Caco-2 (cell line): ENCODE measurements at regions of chr5 and their contacts with region 1.

Region 1: GRCh38 chr5:66239034-66239433 is 94.9 kb downstream of the SREK1 start:
- DNase-seq: peak in 1 of 2 experiments; percentile 28
- H3K4me3 ChIP-seq: no peak overlapping the region
- H3K4me3 Mint-ChIP-seq: no peak overlapping the region
- H3K27ac Mint-ChIP-seq: no peak overlapping the region
- H3K4me1 ChIP-seq: no peaks in the 10 kb centered on the region
- H3K4me1 Mint-ChIP-seq: no peaks in the 10 kb centered on the region
- H3K27me3 ChIP-seq: no peaks in the 10 kb centered on the region; the same call in 1 of the 2 replicates
- H3K27me3 Mint-ChIP-seq: peaks cover 17% of the 10 kb centered on the region
- CTCF ChIP-seq: no peak

Region 2: GRCh38 chr5:65366655-65367054 is 872.4 kb before region 1 on chr5:
- CTCF ChIA-PET with region 1: no interaction called
- POLR2A ChIA-PET with region 1: no interaction called
- intact Hi-C with region 1: no loop called
- DNase-seq: no peak
- H3K4me3 ChIP-seq: no peak overlapping the region
- H3K4me3 Mint-ChIP-seq: no peak overlapping the region
- H3K27ac Mint-ChIP-seq: no peak overlapping the region
- H3K4me1 ChIP-seq: no peaks in the 10 kb centered on the region
- H3K4me1 Mint-ChIP-seq: no peaks in the 10 kb centered on the region
- H3K27me3 ChIP-seq: no peaks in the 10 kb centered on the region
- H3K27me3 Mint-ChIP-seq: no peaks in the 10 kb centered on the region
- CTCF ChIP-seq: no peak

Region 3: DNA sequence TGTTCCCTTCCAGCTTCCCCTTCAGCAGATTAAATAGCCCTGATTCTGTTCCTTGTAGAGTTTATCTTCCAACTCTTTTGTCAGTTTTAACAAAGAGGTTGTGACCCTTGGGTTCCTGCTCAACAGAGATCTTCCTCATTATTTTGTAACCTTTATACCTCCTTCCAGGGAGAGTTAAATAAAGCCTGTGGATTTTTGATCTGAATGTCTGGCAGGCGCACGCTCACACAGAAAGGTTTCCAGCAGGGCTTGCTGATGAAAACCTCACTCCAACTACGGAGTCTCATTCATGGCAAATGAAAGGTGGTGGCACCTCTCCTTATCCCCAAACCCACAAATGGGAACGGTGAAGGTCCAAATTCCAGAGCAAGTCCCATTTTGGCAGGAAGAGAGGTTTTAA is 34.1 kb after region 1 on chr5:
- CTCF ChIA-PET with region 1: no interaction called
- POLR2A ChIA-PET with region 1: no interaction called
- intact Hi-C with region 1: no loop called
- DNase-seq: no peak
- H3K4me3 ChIP-seq: no peak overlapping the region
- H3K4me3 Mint-ChIP-seq: no peak overlapping the region
- H3K27ac Mint-ChIP-seq: no peak overlapping the region
- H3K4me1 ChIP-seq: no peaks in the 10 kb centered on the region
- H3K4me1 Mint-ChIP-seq: no peaks in the 10 kb centered on the region
- H3K27me3 ChIP-seq: no peaks in the 10 kb centered on the region; the same call in 1 of the 2 replicates
- H3K27me3 Mint-ChIP-seq: peaks cover 23% of the 10 kb centered on the region
- CTCF ChIP-seq: no peak

Region 4: DNA sequence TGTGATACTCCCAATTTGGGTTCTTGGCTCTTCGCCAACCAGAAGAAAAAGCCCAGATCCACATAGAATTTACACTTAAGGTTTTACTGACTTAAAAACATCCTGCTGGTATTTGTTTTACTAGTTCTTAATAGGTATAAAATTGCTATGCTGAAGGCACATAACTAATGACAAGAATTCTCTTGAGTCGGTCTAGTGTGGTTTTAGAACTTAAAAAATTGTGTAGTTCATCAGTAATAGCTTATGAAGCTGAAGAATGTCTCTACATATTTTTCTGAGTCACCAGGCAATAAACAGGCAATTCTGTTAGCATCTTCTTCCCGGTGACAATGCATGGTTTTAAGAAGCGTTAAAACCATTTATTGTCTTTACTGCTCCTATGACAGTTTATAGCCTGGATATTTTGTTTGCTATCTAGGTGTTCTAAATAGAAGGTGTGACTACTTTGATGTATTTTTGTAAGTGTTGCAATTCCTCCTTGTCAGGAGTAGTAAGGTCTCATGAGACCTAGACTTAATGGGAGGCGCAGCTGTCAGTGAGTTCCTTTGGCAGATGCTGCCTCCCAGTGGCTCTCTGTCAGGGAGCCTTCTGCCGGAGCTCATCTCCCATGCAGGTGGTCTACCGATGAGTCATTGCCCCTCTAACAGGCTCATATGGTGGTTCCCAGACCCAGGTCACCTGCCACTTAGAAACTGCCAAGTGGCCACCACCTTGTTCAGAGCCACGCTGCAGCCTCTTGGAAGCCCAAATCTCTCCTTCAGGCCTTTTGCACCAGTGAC is 531.0 kb after region 1 on chr5:
- CTCF ChIA-PET with region 1: no interaction called
- POLR2A ChIA-PET with region 1: no interaction called
- intact Hi-C with region 1: loop called (anchors 1 kb)
- DNase-seq: peak; percentile 31 to 35
- H3K4me3 ChIP-seq: no peak overlapping the region
- H3K4me3 Mint-ChIP-seq: no peak overlapping the region
- H3K27ac Mint-ChIP-seq: no peak overlapping the region
- H3K4me1 ChIP-seq: no peaks in the 10 kb centered on the region
- H3K4me1 Mint-ChIP-seq: no peaks in the 10 kb centered on the region
- H3K27me3 ChIP-seq: no peaks in the 10 kb centered on the region
- H3K27me3 Mint-ChIP-seq: peaks cover 12% of the 10 kb centered on the region
- CTCF ChIP-seq: peak; percentile 20 to 58

Region 5: DNA sequence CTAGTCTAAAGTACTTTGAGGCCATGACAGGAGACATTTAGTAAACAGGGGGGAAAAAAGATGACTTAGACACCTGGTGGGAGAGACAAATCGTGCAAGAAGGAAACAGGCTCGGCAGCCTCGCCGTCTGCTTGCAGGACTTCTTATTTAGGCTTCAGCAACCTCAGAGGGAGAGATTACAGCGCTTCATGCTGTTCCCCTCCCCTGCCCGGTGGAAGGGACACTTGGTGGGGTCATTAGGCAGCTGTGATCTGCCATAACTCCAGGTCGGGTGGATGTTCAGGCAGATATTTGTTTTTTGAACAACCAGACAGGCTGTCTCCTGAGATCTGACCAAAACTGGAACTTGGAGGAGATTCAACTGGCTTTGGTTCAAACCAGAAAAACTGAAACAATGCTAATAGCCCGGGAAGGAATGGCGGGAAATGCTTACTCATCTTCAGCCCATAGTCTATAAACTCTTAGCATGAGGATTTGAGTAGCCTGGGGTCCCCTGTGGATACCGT is 995.7 kb after region 1 on chr5:
- CTCF ChIA-PET with region 1: no interaction called
- POLR2A ChIA-PET with region 1: no interaction called
- intact Hi-C with region 1: no loop called
- DNase-seq: no peak
- H3K4me3 ChIP-seq: no peak overlapping the region
- H3K4me3 Mint-ChIP-seq: no peak overlapping the region
- H3K27ac Mint-ChIP-seq: no peak overlapping the region
- H3K4me1 ChIP-seq: peaks cover 15% of the 10 kb centered on the region
- H3K4me1 Mint-ChIP-seq: peaks cover 19% of the 10 kb centered on the region
- H3K27me3 ChIP-seq: no peaks in the 10 kb centered on the region
- H3K27me3 Mint-ChIP-seq: no peaks in the 10 kb centered on the region
- CTCF ChIP-seq: no peak